ENCODE measurements at regions of chr13 and their contacts with region 1.

Region 1: DNA sequence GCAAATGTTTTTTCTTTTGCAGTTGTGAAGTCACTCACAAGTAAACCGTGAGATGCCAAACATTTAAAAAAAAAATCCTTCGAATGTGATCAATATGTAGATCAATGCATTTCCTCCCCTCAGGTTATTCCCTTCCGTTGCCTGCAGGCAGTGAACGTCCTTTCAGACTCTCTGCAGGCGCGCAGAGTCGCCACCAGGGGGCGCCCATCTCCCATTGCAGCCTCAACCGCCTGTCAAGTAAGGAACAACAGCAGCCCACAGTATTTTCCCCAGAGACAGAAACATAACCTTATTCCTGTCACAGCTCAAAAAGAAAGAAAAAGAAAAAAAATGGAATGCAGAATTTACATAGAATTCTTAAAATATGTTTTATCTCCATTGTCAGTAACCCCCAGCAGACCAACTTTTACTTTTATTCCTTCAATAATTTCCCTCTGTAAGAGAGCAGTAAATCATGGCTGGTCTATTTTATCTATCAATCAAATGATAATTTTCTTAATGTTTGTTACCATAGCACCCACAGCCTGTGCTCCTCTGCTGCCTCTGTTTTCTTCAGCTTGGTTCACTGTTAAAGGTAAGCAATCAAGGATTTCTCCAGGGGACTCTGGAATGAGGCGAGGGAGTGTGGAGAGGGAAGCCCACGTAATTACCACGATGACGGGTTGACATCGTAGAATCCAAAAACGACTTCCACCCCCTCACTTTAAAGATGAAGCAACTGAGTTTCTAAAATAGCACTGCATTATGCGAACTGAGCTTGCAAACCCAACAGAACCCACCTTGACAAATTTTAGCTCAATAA is 637.6 kb upstream of the ARGLU1 start:
- DNase-seq: peak; percentile 77 to 90
- H3K4me3 ChIP-seq: no peak overlapping the region
- H3K27ac ChIP-seq: no peak overlapping the region
- H3K4me1 ChIP-seq: peaks cover under 1 to 13% (median 7%) of the 10 kb centered on the region in 4 donors
- H3K27me3 ChIP-seq: no peaks in the 10 kb centered on the region
- CTCF ChIP-seq: peak in 5 of 7 experiments; percentile 73 to 96 (median 95)
- EP300 ChIP-seq: no peak
- POLR2A ChIP-seq: no peak

Region 2: DNA sequence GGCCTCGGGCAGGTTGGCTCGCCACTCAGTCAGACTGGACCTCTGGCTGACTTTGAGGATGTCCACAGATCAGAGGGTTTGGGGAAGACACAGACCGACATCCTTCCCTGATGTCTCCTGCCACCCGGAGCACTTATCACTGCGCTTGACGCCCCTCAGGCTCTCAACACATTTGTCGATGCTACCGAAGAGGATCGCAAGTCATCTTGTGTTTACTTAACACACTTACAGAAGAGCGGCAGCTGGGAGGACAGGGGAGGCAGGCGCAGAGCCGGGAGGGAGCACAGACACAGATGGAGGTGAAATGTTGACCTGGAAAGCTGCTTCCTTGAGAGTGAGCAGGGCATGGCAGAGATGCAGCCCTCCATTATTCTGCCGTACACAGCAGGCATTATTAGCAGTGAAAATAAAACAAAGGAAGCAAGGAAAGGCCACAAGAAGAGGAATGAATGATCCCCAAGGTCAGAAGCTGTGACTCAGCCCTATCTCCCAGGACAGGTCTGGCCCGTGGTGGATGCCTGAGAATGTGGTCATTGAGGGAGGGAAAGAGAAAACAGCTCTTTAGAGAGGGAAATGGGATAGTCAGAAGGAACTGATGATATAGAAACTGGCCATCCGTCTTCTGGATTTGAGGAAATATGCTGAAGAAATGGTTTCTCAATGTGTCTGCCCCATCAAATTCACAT is 88.0 kb before region 1 on chr13:
- intact Hi-C with region 1: no loop called
- DNase-seq: no peak
- H3K4me3 ChIP-seq: no peak overlapping the region
- H3K27ac ChIP-seq: no peak overlapping the region
- H3K4me1 ChIP-seq: peaks cover 0 to 7% (median 0%) of the 10 kb centered on the region in 4 donors
- H3K27me3 ChIP-seq: peaks cover 0 to 8% (median 0%) of the 10 kb centered on the region in 3 donors
- CTCF ChIP-seq: no peak
- EP300 ChIP-seq: no peak
- POLR2A ChIP-seq: no peak

Region 3: DNA sequence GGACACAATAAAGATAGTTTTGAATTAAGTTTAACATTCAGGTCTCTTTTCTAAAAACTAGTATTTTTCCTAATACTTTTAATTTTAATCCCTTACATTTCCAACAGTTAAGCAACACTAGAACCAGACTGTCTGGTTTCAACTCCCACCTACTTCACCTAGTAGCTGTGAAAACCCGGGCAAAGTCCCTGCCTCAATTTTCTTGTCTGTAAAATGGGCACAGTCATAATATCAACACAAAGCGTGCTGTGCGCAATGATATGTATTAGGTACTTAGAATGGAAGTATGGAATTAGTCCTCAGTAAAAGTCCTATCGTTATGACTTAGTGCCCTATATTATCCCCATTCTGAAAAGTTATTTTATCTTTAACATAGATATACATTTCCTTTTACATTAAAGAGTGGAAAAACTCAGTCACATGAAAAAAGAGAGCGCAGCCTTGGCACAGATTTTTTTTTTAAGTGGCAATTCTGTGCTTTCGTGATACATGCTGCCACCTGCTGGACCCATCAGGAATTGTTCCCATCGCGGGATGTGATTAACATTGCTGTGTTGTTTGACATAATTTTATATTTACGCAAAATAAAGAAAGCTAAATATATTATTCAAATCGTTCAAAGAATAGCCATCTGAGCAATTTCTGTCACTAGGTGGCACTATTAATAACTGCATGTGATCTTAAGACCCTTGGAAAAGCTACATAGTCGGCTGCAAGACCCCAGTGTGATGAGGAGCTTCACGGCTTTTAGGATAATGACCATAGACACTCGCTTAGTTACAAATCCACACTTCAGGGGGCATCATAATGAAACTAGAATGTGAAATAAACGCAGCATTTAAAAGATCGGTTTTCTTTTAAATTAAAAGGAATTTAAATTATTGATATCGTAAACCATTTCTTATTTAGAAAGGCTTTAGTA is 949.9 kb after region 1 on chr13:
- intact Hi-C with region 1: loop called (anchors 10 kb)
- DNase-seq: peak; percentile 75 to 80
- H3K4me3 ChIP-seq: no peak overlapping the region
- H3K27ac ChIP-seq: peak overlapping the region in 4 of 5 donors; percentile 67 to 77 (median 72)
- H3K4me1 ChIP-seq: peaks cover 0 to 13% (median 0%) of the 10 kb centered on the region in 4 donors
- H3K27me3 ChIP-seq: no peaks in the 10 kb centered on the region
- CTCF ChIP-seq: peak in 6 of 7 experiments; percentile 17 to 90 (median 78)
- EP300 ChIP-seq: no peak
- POLR2A ChIP-seq: no peak

Measured in stomach (tissue), 19 donors.